ENCODE measurements at regions of chr15 and their contacts with region 1.

Region 1: GRCh38 chr15:63402498-63403253 is 21.0 kb upstream of the CA12 start:
- DNase-seq: peak; percentile 64
- H3K4me3 ChIP-seq: no peak overlapping the region
- H3K27ac ChIP-seq: no peak overlapping the region
- H3K4me1 ChIP-seq: peaks cover 20% of the 10 kb centered on the region
- H3K27me3 ChIP-seq: no peaks in the 10 kb centered on the region

Region 2: GRCh38 chr15:62782039-62782791 is 620.5 kb before region 1 on chr15:
- in situ Hi-C with region 1: loop called (anchors 25 kb)
- DNase-seq: peak; percentile 86
- H3K4me3 ChIP-seq: no peak overlapping the region
- H3K27ac ChIP-seq: no peak overlapping the region
- H3K4me1 ChIP-seq: peaks cover 39% of the 10 kb centered on the region
- H3K27me3 ChIP-seq: no peaks in the 10 kb centered on the region

Region 3: DNA sequence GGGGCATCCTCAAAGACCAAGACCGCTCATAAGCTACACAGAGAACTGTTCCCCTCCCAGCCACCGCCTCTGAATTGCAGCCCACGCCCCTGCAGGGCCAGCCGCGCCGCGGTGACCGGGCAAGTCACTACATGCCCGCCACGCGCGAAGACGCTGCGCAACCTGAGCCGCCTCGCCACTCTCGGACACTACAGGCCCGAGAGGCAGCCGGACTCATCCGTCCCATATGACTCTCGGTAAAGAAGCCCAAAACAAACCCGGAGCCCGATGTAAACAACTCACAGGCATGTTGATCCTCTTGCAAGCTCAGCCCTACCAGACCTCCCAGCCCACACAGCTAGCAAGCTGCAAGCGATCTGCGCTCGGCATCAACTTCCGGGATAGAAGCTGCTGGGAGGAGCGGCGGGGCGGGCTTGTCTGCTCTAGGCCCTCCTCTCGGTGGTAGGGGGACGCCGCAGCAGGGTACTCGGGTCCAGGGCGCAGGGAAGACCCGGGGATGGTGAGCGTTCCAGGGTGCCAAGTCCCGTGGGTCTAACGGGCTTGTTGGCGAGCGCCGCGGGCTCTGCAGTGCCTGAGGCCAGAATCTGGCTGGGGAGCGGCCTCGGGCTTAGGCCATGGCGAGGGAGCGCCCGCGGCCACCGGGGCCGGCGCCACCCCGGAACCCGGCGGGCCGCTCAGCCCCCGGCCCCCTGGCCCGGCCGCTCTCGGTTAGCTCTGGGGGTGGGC is 245.4 kb before region 1 on chr15 and contains the start of gene RPS27L:
- in situ Hi-C with region 1: loop called (anchors 25 kb)
- DNase-seq: peak; percentile 94
- H3K4me3 ChIP-seq: peak within 1 kb of the TSS; percentile 99
- H3K27ac ChIP-seq: peak within 1 kb of the TSS; percentile 99
- H3K4me1 ChIP-seq: peaks cover 20% of the 10 kb centered on the region
- H3K27me3 ChIP-seq: no peaks in the 10 kb centered on the region
- total RNA-seq, gene RPS27L: 110 and 151 TPM in 2 replicates

Region 4: GRCh38 chr15:63291507-63291906 is 111.2 kb before region 1 on chr15:
- in situ Hi-C with region 1: loop called (anchors 5 kb)
- DNase-seq: peak; percentile 87
- H3K4me3 ChIP-seq: 0 out of 2 replicates have a peak overlapping the region, but pooled peaks have one; percentile 4
- H3K27ac ChIP-seq: peak overlapping the region; percentile 84
- H3K4me1 ChIP-seq: peaks cover 39% of the 10 kb centered on the region
- H3K27me3 ChIP-seq: no peaks in the 10 kb centered on the region

Measured in GM23248 (cell line).